GM12878 (cell line): ENCODE measurements at regions of chr18 and their contacts with region 1.

Region 1: GRCh38 chr18:34122724-34123334 is 101.9 kb downstream of the NOL4 start:
- DNase-seq: peak; percentile 17
- ATAC-seq: peak; percentile 81
- H3K4me3 ChIP-seq: no peak overlapping the region
- H3K27ac ChIP-seq: no peak overlapping the region
- H3K4me1 ChIP-seq: no peaks in the 10 kb centered on the region
- H3K27me3 ChIP-seq: no peaks in the 10 kb centered on the region
- CTCF ChIP-seq: peak; percentile 80 to 99 (median 91); a peak in 5 of 6 replicates
- EP300 ChIP-seq: no peak
- POLR2A ChIP-seq: no peak
- RAD21 ChIP-seq: peak; percentile 98

Region 2: DNA sequence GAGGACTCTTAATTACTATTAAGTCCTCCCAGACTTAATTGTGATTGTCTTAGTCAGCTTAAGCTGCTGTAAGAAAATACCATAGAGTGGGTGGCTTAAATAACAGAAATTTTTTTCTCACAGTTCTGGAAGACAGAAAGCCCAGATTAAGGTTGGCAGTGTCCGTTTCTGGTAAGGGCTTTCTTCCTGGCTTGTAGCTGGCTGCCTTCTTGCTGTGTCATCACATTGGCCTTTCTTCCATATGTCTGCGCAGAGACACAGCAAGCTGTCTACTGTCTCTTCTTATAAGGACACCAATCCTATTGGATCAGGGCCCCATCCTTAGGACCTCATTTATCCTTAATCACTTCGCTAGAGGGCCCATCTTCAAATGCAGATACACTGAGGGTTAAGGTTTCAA is 506.3 kb before region 1 on chr18:
- CTCF ChIA-PET with region 1: no interaction called
- POLR2A ChIA-PET with region 1: no interaction called
- RAD21 ChIA-PET with region 1: no interaction called
- SMC1A ChIA-PET with region 1: no interaction called
- in situ Hi-C with region 1: no loop called
- intact Hi-C with region 1: no loop called
- DNase-seq: no peak
- ATAC-seq: no peak
- H3K4me3 ChIP-seq: no peak overlapping the region
- H3K27ac ChIP-seq: no peak overlapping the region
- H3K4me1 ChIP-seq: no peaks in the 10 kb centered on the region
- H3K27me3 ChIP-seq: no peaks in the 10 kb centered on the region
- CTCF ChIP-seq: no peak
- EP300 ChIP-seq: no peak
- POLR2A ChIP-seq: no peak
- RAD21 ChIP-seq: no peak

Region 3: DNA sequence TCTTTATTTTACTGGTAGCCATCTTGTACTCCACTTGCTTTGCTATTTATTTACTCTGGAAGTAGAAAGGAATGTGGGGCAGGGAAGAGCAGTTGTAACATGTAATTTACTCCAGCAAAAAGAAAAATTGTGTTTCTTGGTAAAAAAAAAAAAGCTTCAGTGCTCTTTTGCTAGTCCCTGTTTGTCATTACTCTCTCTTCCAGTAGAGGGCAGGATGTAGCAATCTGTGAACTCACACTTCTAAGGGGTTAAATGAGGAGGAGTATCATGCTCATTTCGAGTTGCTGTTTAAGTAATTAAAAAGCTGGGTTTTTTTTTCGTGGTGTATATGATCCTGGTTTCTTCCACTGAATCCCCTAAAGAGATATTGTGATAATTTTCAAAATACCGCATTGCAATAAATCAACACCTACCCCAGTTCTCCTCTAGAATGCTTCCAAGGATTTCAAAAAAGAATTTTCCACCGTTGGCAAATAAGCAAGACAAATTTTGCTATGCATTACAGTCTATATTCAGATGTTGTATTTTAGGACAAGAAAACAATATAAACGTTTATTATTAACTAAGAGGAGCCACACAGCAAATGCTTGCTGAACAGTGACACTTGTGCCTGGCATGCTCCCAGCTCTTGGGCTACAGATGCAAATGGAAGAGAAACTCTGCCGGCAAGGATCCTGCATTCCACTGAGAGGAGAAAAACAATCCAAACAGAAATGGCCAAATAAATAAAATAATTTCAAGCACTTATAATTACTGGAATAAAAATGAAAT is 283.2 kb before region 1 on chr18:
- CTCF ChIA-PET with region 1: interaction called, 79 read pairs
- POLR2A ChIA-PET with region 1: interaction called, 5 read pairs
- RAD21 ChIA-PET with region 1: interaction called, 74 read pairs
- SMC1A ChIA-PET with region 1: interaction called, 83 read pairs
- in situ Hi-C with region 1: no loop called
- intact Hi-C with region 1: loop called (anchors 2 kb)
- DNase-seq: no peak
- ATAC-seq: peak; percentile 72
- H3K4me3 ChIP-seq: no peak overlapping the region
- H3K27ac ChIP-seq: no peak overlapping the region
- H3K4me1 ChIP-seq: no peaks in the 10 kb centered on the region
- H3K27me3 ChIP-seq: no peaks in the 10 kb centered on the region
- CTCF ChIP-seq: peak; percentile 68 to 78 (median 75)
- EP300 ChIP-seq: no peak
- POLR2A ChIP-seq: no peak
- RAD21 ChIP-seq: peak; percentile 80

Region 4: GRCh38 chr18:34158881-34159690 is 36.3 kb after region 1 on chr18:
- CTCF ChIA-PET with region 1: interaction called, 43 read pairs
- POLR2A ChIA-PET with region 1: interaction called, 6 read pairs
- RAD21 ChIA-PET with region 1: interaction called, 30 read pairs
- SMC1A ChIA-PET with region 1: interaction called, 18 read pairs
- in situ Hi-C with region 1: no loop called
- intact Hi-C with region 1: no loop called
- DNase-seq: no peak
- ATAC-seq: peak; percentile 83
- H3K4me3 ChIP-seq: no peak overlapping the region
- H3K27ac ChIP-seq: no peak overlapping the region
- H3K4me1 ChIP-seq: no peaks in the 10 kb centered on the region
- H3K27me3 ChIP-seq: no peaks in the 10 kb centered on the region
- CTCF ChIP-seq: peak in 2 of 3 experiments; percentile 28 to 51; a peak in 1 of 6 replicates
- EP300 ChIP-seq: no peak
- POLR2A ChIP-seq: no peak
- RAD21 ChIP-seq: peak; percentile 33; the same call in 1 of the 2 replicates

Region 5: DNA sequence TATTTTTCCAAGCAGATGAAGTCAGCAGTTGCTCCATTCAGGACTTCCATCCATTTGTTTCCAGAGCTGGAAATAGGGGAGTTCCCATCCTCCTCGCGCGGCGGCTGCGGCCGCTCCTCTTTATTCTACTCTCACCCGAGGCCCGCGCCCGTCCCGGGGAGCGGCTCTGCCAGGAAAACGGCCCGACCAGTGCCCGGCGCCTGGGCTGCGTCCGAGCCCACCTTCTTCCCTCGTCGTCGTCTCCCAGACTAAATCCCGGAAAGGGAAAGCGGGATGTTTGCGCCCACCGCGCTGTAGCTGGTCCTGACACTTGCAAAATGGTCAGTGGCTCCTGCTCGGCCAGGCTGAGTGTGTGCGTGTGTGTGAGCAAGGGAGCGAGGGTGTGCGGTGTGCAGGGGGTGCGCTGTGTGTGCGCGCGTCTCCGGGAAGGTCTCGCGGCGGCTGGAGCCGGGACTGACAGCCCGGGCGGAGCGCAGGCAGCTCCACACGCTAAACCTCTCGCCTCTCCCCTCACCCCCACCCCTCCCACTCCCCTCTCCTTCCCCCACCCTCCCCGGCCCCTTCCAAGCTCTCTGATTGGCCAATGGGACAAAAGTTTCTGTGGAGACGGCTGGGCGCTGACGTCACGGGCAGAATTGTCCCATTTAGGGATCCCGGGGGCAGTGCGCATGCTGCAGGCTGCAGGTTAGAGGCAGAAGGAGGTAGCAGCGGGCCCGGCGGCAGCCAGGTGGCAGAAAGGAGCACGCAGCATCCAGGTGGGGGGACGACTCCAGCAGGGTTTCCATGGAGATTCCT is 101.8 kb after region 1 on chr18 and contains the start of gene NOL4:
- CTCF ChIA-PET with region 1: interaction called, 31 read pairs
- POLR2A ChIA-PET with region 1: no interaction called
- RAD21 ChIA-PET with region 1: interaction called, 47 read pairs
- SMC1A ChIA-PET with region 1: interaction called, 34 read pairs
- in situ Hi-C with region 1: no loop called
- intact Hi-C with region 1: loop called (anchors 2 kb)
- DNase-seq: no peak
- ATAC-seq: peak; percentile 45
- H3K4me3 ChIP-seq: no peak within 1 kb of the TSS
- H3K27ac ChIP-seq: no peak within 1 kb of the TSS
- H3K4me1 ChIP-seq: no peaks in the 10 kb centered on the region
- H3K27me3 ChIP-seq: peaks cover 0 to 13% of the 10 kb centered on the region in 2 experiments
- CTCF ChIP-seq: peak in 2 of 3 experiments; percentile 51 to 66; a peak in 4 of 6 replicates
- EP300 ChIP-seq: no peak
- POLR2A ChIP-seq: no peak
- RAD21 ChIP-seq: peak; percentile 6; the same call in 1 of the 2 replicates
- polyA plus RNA-seq, gene NOL4: 1.3 to 2.8 TPM

Region 6: DNA sequence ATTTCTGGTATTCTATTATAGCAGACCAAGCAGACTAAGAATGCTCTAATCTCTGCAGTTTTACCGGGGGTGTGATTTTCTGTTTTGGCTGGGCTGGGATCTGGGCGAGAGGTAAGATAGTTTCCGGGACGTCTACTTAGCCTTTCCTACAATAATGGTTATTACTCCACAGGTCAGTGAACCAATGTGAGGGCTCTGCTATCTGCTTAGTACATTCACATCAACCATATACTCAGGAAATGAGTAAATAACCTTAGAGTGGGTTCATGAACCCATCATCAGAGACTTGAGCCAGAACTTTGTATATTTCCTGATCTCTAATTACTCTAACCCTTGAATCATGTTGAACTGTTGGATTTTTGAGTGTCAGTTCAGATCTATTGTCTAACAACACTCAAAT is 192.0 kb after region 1 on chr18:
- CTCF ChIA-PET with region 1: interaction called, 341 read pairs
- POLR2A ChIA-PET with region 1: no interaction called
- RAD21 ChIA-PET with region 1: interaction called, 247 read pairs
- SMC1A ChIA-PET with region 1: interaction called, 301 read pairs
- in situ Hi-C with region 1: loop called (anchors 5 kb)
- intact Hi-C with region 1: no loop called
- DNase-seq: no peak
- ATAC-seq: no peak
- H3K4me3 ChIP-seq: no peak overlapping the region
- H3K27ac ChIP-seq: no peak overlapping the region
- H3K4me1 ChIP-seq: no peaks in the 10 kb centered on the region
- H3K27me3 ChIP-seq: no peaks in the 10 kb centered on the region
- CTCF ChIP-seq: no peak
- EP300 ChIP-seq: no peak
- POLR2A ChIP-seq: no peak
- RAD21 ChIP-seq: no peak

Region 7: DNA sequence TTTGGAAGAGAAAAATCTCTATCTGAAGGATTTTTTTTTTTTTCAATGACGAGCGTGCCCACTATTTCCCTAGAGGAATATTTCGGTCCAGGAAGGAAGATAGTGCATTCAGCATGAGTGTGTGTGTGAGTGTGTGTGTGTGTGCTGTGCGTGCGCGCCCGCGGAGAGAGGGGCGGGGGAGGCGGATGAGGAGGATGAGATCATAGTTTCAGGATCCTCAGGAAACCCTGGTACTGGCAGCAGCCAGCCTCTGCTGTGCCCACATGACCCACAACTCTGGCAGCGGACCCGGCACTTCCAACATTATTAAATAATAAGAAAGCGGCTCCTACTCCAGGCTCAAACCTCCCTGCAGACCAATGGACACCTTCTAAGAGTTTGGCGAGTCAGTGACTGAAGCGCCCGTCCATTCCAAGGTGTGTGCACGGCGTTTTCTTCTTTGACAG is 370.3 kb after region 1 on chr18:
- CTCF ChIA-PET with region 1: interaction called, 8 read pairs
- POLR2A ChIA-PET with region 1: interaction called, 4 read pairs
- RAD21 ChIA-PET with region 1: interaction called, 10 read pairs
- SMC1A ChIA-PET with region 1: interaction called, 7 read pairs
- in situ Hi-C with region 1: no loop called
- intact Hi-C with region 1: loop called (anchors 10 kb)
- DNase-seq: no peak
- ATAC-seq: peak; percentile 73
- H3K4me3 ChIP-seq: peak overlapping the region; percentile 57; the same call in 1 of the 2 replicates
- H3K27ac ChIP-seq: no peak overlapping the region
- H3K4me1 ChIP-seq: no peaks in the 10 kb centered on the region
- H3K27me3 ChIP-seq: no peaks in the 10 kb centered on the region
- CTCF ChIP-seq: no peak
- EP300 ChIP-seq: peak in 1 of 2 experiments; percentile 49; a peak in 1 of 4 replicates
- POLR2A ChIP-seq: no peak
- RAD21 ChIP-seq: no peak

Region 8: DNA sequence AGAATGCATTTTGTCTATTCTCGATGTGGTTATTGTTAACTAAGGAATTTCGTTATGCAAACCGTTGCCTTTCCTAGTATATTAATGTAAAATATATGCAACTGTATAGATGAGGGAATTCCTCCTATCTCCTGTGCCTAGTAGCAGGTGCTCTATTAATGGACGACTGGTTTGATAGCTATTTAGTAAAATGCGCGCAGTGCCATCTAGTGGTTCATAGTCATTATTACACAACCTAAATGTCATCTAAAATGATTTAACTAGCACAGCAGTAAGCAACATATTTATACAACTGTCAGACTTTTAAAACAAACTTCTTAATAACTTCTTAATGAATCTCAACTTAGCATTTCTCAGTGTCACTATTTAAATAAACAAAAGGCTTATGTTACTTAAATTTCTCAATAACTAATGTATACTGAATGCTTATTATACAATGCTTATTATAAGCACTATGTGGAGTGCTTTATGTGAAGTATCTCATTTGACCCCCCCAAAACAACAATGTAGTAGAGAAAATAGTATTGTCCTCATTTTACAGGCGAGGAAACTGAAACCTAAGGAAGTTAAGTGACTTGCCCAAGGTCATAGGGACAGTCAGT is 665.2 kb after region 1 on chr18:
- CTCF ChIA-PET with region 1: interaction called, 37 read pairs
- POLR2A ChIA-PET with region 1: no interaction called
- RAD21 ChIA-PET with region 1: interaction called, 20 read pairs
- SMC1A ChIA-PET with region 1: interaction called, 20 read pairs
- in situ Hi-C with region 1: loop called (anchors 5 kb)
- intact Hi-C with region 1: loop called (anchors 2 kb)
- DNase-seq: peak; percentile 11
- ATAC-seq: peak; percentile 79
- H3K4me3 ChIP-seq: no peak overlapping the region
- H3K27ac ChIP-seq: no peak overlapping the region
- H3K4me1 ChIP-seq: no peaks in the 10 kb centered on the region
- H3K27me3 ChIP-seq: no peaks in the 10 kb centered on the region; a peak in 1 of 4 replicates
- CTCF ChIP-seq: peak; percentile 43 to 70 (median 58); a peak in 5 of 6 replicates
- EP300 ChIP-seq: no peak
- POLR2A ChIP-seq: no peak
- RAD21 ChIP-seq: peak; percentile 81